Activated naive CD4-positive, alpha-beta T cell treated with anti-CD3 and anti-CD28 coated beads for 36 hours (primary cell): ENCODE measurements at regions of chr6 and their contacts with region 1.

Region 1: DNA sequence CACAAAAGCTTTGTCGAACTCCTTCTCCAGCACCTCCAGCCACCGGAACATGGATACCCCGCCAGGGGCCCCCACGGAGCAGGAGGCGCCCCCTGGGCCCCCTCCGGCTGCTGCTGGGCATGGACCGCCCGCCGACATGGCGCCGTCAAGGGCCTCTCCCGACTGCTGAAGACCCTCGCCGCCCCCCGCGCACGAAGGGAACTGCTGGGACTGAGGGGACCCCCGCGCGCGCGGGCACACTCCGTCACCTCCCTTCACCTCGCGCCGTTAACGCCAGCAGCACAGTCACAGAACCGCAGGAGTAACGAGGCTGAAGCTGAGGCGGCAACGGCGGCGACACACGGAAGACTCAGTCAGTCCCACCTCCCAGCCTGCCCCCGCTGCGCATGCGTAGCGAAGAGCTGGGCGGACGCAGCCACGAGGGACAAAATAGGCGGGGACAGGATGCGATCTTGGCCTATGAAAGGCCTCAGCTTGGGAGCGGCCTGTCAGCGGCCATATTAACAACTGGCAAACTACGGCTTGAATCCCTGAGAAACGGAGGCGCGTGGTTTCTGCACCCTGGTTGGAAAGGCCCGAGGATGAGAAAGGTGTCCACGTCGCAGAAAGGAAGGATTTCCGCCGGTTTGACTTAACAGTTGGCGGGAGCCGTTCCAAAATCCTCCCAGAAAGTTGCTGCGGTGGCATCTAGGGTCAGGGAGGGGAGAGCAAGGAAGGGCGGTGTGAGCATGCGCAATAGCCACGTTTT is at the start of gene GOPC:
- DNase-seq: peak; percentile 96
- H3K4me3 Mint-ChIP-seq: peak within 1 kb of the TSS; percentile 99
- H3K27ac Mint-ChIP-seq: peak within 1 kb of the TSS; percentile 98
- H3K4me1 Mint-ChIP-seq: peaks cover 33% of the 10 kb centered on the region
- H3K27me3 Mint-ChIP-seq: no peaks in the 10 kb centered on the region
- total RNA-seq, gene GOPC: 7.2 to 7.5 TPM

Region 2: GRCh38 chr6:116279260-116280063 is 1322.9 kb before region 1 on chr6 and contains the start of gene TSPYL1:
- CTCF ChIA-PET with region 1: no interaction called
- intact Hi-C with region 1: loop called (anchors 2 kb)
- DNase-seq: peak; percentile 97
- H3K4me3 Mint-ChIP-seq: peak within 1 kb of the TSS; percentile 93
- H3K27ac Mint-ChIP-seq: peak within 1 kb of the TSS; percentile 96
- H3K4me1 Mint-ChIP-seq: peaks cover 36% of the 10 kb centered on the region
- H3K27me3 Mint-ChIP-seq: no peaks in the 10 kb centered on the region
- total RNA-seq, gene TSPYL1: 33.4 to 34.7 TPM

Region 3: DNA sequence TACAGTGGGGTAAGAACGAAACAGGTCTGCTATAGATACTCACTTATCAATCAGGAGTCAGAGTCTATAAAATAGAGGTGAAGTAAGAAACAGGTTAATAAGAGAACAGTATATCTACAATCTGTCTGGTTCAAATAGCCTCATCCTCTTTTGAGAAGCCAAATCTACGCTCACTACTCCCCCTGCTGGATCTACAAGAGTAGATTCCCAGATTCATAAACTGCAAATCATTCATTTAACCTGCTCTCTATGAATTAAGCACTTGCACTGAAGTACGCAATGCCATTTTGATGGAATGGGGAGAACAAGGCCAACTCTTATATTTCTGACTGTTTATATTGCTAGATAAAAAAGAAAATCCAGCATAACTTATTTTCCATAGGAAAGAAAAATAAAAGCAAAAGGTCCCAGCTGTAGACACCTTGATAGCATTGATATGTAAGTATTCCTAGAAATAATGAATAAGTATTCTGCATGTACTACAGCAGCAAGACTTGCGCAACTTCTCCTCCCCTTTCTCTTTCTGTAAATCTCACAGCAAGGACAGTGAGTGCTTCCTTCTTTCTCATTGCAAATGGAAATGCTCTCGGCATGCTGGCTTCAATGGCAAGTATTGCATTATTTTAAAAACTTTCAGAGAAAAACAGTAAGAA is 633.0 kb before region 1 on chr6:
- CTCF ChIA-PET with region 1: no interaction called
- intact Hi-C with region 1: loop called (anchors 5 kb)
- DNase-seq: peak; percentile 33
- H3K4me3 Mint-ChIP-seq: no peak overlapping the region
- H3K27ac Mint-ChIP-seq: no peak overlapping the region
- H3K4me1 Mint-ChIP-seq: no peaks in the 10 kb centered on the region
- H3K27me3 Mint-ChIP-seq: peaks cover 15% of the 10 kb centered on the region

Region 4: GRCh38 chr6:117449549-117450439 is 152.5 kb before region 1 on chr6:
- CTCF ChIA-PET with region 1: interaction called, 44 read pairs
- intact Hi-C with region 1: loop called (anchors 1 kb)
- DNase-seq: peak; percentile 80
- H3K4me3 Mint-ChIP-seq: no peak overlapping the region
- H3K27ac Mint-ChIP-seq: no peak overlapping the region
- H3K4me1 Mint-ChIP-seq: no peaks in the 10 kb centered on the region
- H3K27me3 Mint-ChIP-seq: peaks cover 13% of the 10 kb centered on the region

Region 5: GRCh38 chr6:117555882-117556498 is 46.3 kb before region 1 on chr6:
- CTCF ChIA-PET with region 1: interaction called, 6 read pairs
- intact Hi-C with region 1: loop called (anchors 1 kb)
- DNase-seq: peak; percentile 78
- H3K4me3 Mint-ChIP-seq: no peak overlapping the region
- H3K27ac Mint-ChIP-seq: no peak overlapping the region
- H3K4me1 Mint-ChIP-seq: peaks cover under 1% of the 10 kb centered on the region
- H3K27me3 Mint-ChIP-seq: peaks cover 2% of the 10 kb centered on the region

Region 6: GRCh38 chr6:117615894-117616390 is 13.6 kb after region 1 on chr6:
- CTCF ChIA-PET with region 1: interaction called, 3 read pairs
- intact Hi-C with region 1: loop called (anchors 1 kb)
- DNase-seq: no peak
- H3K4me3 Mint-ChIP-seq: no peak overlapping the region
- H3K27ac Mint-ChIP-seq: peak overlapping the region; percentile 66
- H3K4me1 Mint-ChIP-seq: peaks cover 30% of the 10 kb centered on the region
- H3K27me3 Mint-ChIP-seq: peaks cover 5% of the 10 kb centered on the region

Region 7: DNA sequence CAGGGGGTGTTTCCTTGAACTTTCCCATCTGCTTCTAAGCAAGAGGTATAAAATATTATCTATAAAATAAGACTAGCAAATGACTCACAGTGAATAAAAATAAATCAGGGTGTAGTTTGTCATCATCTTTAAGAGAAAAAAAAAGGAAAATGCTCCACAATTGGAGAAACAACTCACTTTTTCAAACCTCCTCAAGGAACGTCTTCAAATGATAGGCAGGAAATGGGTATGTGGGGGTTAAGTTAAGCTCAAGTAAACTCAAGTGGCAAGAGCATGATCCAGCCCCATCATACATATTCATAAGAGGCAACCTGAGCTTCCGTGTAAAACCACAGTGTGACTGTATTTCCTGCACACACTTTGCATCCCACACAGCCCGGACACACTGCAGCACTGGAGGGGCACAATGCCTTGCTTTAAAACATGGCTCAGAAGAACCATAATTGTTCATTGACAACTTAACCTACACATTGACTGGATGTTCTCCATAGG is 1107.6 kb after region 1 on chr6:
- CTCF ChIA-PET with region 1: no interaction called
- intact Hi-C with region 1: no loop called
- DNase-seq: peak; percentile 88
- H3K4me3 Mint-ChIP-seq: peak overlapping the region; percentile 82
- H3K27ac Mint-ChIP-seq: peak overlapping the region; percentile 98
- H3K4me1 Mint-ChIP-seq: peaks cover 70% of the 10 kb centered on the region
- H3K27me3 Mint-ChIP-seq: no peaks in the 10 kb centered on the region